PC-3 (cell line): ENCODE measurements at regions of chr16 and their contacts with region 1.

Region 1: GRCh38 chr16:18801197-18801972 is at the start of gene ARL6IP1:
- DNase-seq: peak; percentile 98
- ATAC-seq: peak; percentile 94
- H3K4me3 ChIP-seq: peak within 1 kb of the TSS; percentile 100
- H3K27ac ChIP-seq: peak within 1 kb of the TSS; percentile 91
- H3K4me1 ChIP-seq: peaks cover 33% of the 10 kb centered on the region
- H3K27me3 ChIP-seq: no peaks in the 10 kb centered on the region
- CTCF ChIP-seq: peak; percentile 80
- total RNA-seq, gene ARL6IP1: 118 and 150 TPM in 2 replicates

Region 2: GRCh38 chr16:18789850-18790724 is 11.3 kb before region 1 on chr16 and contains the start of gene RPS15A:
- CTCF ChIA-PET with region 1: interaction called, 7 read pairs
- POLR2A ChIA-PET with region 1: interaction called, 11 read pairs
- intact Hi-C with region 1: no loop called
- DNase-seq: peak; percentile 94
- ATAC-seq: peak; percentile 93
- H3K4me3 ChIP-seq: peak within 1 kb of the TSS; percentile 99
- H3K27ac ChIP-seq: peak within 1 kb of the TSS; percentile 42
- H3K4me1 ChIP-seq: peaks cover 15% of the 10 kb centered on the region
- H3K27me3 ChIP-seq: no peaks in the 10 kb centered on the region
- CTCF ChIP-seq: no peak
- total RNA-seq, gene RPS15A: 704 and 1,198 TPM in 2 replicates

Region 3: DNA sequence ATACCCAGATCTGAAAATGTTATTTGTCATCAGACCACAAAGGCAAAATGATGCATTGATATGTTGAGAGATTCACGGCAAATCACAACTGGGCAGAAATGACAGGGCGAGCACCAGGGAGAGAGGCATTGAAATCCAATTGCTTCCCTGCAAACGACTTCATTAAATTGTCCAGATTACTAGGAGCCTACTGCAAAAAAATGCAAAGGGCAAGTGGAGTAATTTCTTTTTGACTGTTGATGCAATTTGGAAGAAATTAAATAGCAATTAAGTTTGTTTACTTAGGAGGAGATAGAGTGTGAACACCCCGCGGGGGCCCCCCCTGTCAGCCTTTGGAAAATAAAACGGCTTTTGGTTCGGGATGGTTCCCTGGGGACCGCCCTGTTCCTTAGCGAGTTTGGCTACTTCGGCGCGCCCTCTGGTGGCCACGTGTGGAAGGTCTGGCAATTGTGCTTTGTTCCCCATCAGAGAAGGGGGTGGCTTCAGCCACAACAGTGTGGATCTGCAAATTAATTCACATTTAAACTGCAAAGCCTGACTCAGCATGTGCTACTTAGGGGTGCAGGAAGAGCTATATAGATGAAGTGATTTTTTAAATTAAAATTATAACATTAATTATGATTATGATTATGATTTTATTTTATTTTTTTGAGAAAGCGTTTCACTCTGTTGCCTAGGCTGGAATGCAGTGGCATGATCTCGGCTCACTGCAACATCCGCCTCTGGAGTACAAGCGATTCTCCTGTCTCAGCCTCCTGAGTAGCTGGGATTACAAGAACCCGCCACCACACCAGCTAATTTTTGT is 167.9 kb after region 1 on chr16:
- CTCF ChIA-PET with region 1: no interaction called
- POLR2A ChIA-PET with region 1: no interaction called
- intact Hi-C with region 1: loop called (anchors 10 kb)
- DNase-seq: peak; percentile 78
- ATAC-seq: peak; percentile 94
- H3K4me3 ChIP-seq: peak overlapping the region; percentile 65
- H3K27ac ChIP-seq: no peak overlapping the region
- H3K4me1 ChIP-seq: no peaks in the 10 kb centered on the region
- H3K27me3 ChIP-seq: no peaks in the 10 kb centered on the region
- CTCF ChIP-seq: peak; percentile 87

Region 4: DNA sequence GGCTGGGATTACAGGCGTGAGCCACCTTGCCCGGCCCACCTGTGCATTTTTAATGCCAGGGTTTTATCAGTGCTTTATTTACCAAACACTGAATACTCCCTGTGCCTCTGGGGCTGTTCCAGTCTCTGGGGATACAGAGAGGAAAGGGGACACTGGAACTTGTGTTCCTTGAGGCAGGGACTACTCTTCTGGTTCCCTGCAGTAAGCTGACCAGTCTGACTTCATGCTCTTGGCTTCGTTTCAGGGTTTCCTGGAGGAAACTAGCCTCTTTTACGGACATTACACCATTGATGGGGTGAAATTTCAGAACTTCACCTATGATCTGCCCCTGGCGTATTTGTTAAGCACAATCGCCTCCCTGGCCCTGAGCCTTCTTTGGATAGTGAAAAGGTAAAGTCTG is 228.6 kb after region 1 on chr16:
- CTCF ChIA-PET with region 1: no interaction called
- POLR2A ChIA-PET with region 1: no interaction called
- intact Hi-C with region 1: no loop called
- DNase-seq: no peak
- ATAC-seq: no peak
- H3K4me3 ChIP-seq: no peak overlapping the region
- H3K27ac ChIP-seq: no peak overlapping the region
- H3K4me1 ChIP-seq: no peaks in the 10 kb centered on the region
- H3K27me3 ChIP-seq: no peaks in the 10 kb centered on the region
- CTCF ChIP-seq: no peak

Region 5: DNA sequence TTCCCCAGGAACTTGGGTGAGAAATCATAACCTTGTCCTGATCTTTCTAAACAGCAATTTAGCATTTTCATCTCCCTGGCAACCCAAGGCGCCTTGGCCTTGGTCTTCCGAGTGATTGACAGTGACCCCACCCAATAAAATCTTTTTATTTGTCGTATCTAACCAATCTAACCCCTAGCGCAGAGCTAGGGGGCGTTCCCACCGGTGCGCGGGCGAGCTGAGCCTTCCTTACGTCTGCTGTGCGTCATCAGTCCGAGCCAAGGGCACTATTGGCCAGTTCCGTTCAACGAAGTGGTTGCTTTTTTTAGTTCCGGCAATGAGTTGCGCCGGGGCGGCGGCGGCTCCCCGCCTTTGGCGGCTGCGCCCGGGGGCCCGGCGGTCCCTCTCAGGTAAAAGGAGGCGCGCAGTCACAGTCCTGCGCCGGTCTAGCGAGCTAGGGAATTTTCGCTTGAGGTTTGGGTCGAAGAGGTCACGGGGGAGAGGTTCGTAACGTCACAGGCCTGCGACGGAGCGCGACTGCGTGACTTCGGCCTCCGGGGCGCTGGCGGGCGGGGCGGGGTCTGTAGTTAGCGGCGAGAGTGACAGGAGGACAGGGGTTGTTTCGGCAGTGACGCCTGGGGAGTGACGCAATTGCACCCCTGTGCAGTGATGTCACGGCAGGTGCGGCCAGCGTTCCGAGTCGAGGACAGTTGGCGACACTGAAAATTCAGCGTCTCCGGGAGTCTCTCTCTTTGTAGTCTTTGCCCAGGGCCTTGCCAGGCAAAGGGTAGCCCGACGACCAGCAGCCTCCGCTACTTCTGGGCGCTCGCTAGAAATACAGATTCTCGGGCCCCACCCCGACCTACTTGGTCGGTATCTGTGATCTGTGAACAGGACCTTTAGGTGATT is 266.2 kb after region 1 on chr16 and contains the start of gene COQ7:
- CTCF ChIA-PET with region 1: no interaction called
- POLR2A ChIA-PET with region 1: no interaction called
- intact Hi-C with region 1: loop called (anchors 5 kb)
- DNase-seq: peak; percentile 98
- ATAC-seq: peak; percentile 89
- H3K4me3 ChIP-seq: peak within 1 kb of the TSS; percentile 95
- H3K27ac ChIP-seq: peak within 1 kb of the TSS; percentile 98
- H3K4me1 ChIP-seq: peaks cover 6% of the 10 kb centered on the region; the same call in 1 of the 2 replicates
- H3K27me3 ChIP-seq: no peaks in the 10 kb centered on the region
- CTCF ChIP-seq: no peak
- total RNA-seq, gene COQ7: 12.2 and 25.0 TPM in 2 replicates

Region 6: DNA sequence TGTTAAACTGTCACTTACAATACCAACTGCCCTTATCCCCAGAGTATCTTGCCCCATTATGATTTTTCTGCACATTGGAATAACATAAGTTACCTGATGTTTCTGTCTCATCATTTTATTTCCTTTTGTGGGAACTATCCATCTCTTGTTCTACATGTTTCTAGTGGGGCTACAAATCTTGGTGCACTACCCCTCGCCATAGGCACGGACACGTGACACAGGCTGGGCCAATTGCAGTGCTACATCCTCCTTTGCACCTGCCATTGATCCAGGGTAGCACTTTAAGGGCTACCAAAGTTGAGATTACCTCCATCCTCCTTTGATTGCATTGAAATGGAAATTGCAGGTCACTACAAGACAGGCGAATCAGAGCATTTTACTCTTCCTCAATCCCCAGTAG is 352.5 kb after region 1 on chr16:
- CTCF ChIA-PET with region 1: no interaction called
- POLR2A ChIA-PET with region 1: no interaction called
- intact Hi-C with region 1: no loop called
- DNase-seq: peak; percentile 62
- ATAC-seq: no peak
- H3K4me3 ChIP-seq: no peak overlapping the region
- H3K27ac ChIP-seq: no peak overlapping the region
- H3K4me1 ChIP-seq: no peaks in the 10 kb centered on the region
- H3K27me3 ChIP-seq: no peaks in the 10 kb centered on the region
- CTCF ChIP-seq: no peak

Region 7: GRCh38 chr16:19419691-19420060 is 618.3 kb after region 1 on chr16:
- CTCF ChIA-PET with region 1: interaction called, 13 read pairs
- POLR2A ChIA-PET with region 1: no interaction called
- intact Hi-C with region 1: no loop called
- DNase-seq: peak; percentile 98
- ATAC-seq: peak; percentile 91
- H3K4me3 ChIP-seq: no peak overlapping the region
- H3K27ac ChIP-seq: peak overlapping the region; percentile 87
- H3K4me1 ChIP-seq: peaks cover 22% of the 10 kb centered on the region
- H3K27me3 ChIP-seq: no peaks in the 10 kb centered on the region
- CTCF ChIP-seq: no peak